ENCODE measurements at regions of chr10 and their contacts with region 1.

Region 1: DNA sequence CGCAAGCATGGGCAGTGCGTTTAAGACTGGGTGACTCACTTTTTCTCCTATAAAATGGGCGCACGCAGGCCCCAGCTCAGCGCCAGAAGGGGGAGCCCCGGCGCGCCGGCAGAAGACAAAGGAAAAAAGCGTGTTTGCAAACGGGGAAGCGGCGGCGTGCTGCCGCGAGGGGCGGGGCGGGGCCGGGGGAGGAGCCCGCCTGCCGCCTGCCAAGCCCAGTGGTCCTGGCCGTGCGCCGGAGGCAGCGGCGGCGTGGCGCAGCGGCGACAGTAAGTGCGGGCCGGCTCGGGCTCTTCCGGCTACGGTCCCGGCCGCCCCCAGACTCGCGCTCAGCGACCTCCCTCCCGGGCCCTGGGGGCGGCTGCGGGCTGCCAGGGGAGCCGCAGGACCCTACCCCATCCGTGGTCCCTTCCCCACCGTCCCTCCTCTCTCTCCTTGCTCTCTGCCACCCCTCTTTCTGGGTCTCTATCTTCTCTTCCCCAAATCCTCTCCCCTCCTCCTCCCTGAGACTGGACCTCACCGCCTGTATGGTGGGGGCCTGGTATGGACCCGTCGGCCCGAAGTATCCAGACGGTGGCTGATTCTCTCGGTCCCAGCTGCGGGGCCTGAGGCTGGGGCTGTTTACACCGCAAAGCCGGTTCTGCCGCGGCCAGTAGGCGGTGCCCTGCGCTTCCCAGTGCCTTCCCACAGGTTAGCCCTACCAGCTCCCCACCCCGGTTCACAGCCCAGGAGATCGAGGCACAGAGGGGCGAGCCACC is at the start of gene SLC29A3:
- DNase-seq: peak; percentile 59
- ATAC-seq: peak; percentile 91
- H3K4me3 ChIP-seq: peak within 1 kb of the TSS; percentile 73 to 86
- H3K27ac ChIP-seq: peak within 1 kb of the TSS; percentile 57; the same call in 1 of the 2 replicates
- H3K4me1 ChIP-seq: peaks cover 7 to 17% of the 10 kb centered on the region in 2 experiments; a peak in 3 of 4 replicates
- H3K27me3 ChIP-seq: no peaks in the 10 kb centered on the region
- CTCF ChIP-seq: peak; percentile 69 to 77 (median 73)
- POLR2A ChIP-seq: peak; percentile 61
- RAD21 ChIP-seq: peak; percentile 90
- total RNA-seq, gene SLC29A3: 5.9 TPM

Region 2: DNA sequence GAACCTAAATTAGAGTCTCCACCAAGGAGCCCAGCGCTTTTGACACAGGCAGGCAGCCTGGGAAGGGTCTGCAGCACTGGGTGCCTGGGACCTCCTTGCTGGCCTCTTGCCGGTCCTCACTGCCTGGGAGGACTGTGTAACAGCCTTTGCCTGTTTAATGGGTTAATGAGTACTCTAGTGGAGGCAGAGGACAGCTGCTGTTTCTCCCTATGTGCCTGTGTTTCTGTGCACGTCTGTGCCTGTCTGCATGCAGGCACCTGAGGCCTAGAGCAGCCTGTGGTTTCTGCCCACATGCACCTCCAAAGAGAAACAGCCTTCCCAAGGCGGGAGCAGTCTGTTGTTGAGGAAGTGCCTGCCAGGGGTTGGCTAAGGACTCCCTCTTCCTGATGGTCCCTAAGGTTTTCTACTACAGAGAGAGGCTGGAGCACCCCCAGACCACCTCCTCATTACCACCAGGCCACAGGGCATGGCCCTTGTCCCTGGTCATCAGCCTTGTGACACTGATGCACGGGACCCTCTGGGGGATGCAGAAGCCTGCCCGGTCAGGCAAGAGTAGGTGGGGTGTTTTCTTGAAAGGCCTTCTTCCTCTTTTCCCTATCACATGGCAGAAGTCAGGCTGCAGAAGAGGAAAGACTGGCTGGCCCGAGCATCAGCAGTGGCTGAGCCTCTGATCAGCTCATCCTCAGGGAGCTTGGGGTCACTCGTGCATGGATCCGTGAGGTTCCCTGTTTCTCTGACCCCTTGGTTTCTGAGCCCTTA is 14.1 kb after region 1 on chr10:
- CTCF ChIA-PET with region 1: no interaction called
- POLR2A ChIA-PET with region 1: no interaction called
- RAD21 ChIA-PET with region 1: no interaction called
- intact Hi-C with region 1: no loop called
- DNase-seq: no peak
- ATAC-seq: no peak
- H3K4me3 ChIP-seq: no peak overlapping the region
- H3K27ac ChIP-seq: no peak overlapping the region
- H3K4me1 ChIP-seq: no peaks in the 10 kb centered on the region
- H3K27me3 ChIP-seq: no peaks in the 10 kb centered on the region
- CTCF ChIP-seq: no peak
- POLR2A ChIP-seq: no peak
- RAD21 ChIP-seq: no peak

Region 3: GRCh38 chr10:71371750-71372166 is 52.5 kb after region 1 on chr10:
- CTCF ChIA-PET with region 1: interaction called, 22 read pairs
- POLR2A ChIA-PET with region 1: interaction called, 18 read pairs
- RAD21 ChIA-PET with region 1: interaction called in 1 of 2 experiments, 5 read pairs
- intact Hi-C with region 1: no loop called
- DNase-seq: no peak
- ATAC-seq: no peak
- H3K4me3 ChIP-seq: no peak overlapping the region
- H3K27ac ChIP-seq: no peak overlapping the region
- H3K4me1 ChIP-seq: peaks cover 6 to 21% of the 10 kb centered on the region in 2 experiments; a peak in 3 of 4 replicates
- H3K27me3 ChIP-seq: no peaks in the 10 kb centered on the region
- CTCF ChIP-seq: no peak
- POLR2A ChIP-seq: no peak
- RAD21 ChIP-seq: no peak

Region 4: GRCh38 chr10:71378336-71379117 is 59.3 kb after region 1 on chr10:
- CTCF ChIA-PET with region 1: interaction called, 22 read pairs
- POLR2A ChIA-PET with region 1: interaction called, 18 read pairs
- RAD21 ChIA-PET with region 1: interaction called, 3 to 5 read pairs
- intact Hi-C with region 1: loop called (anchors 1 kb)
- DNase-seq: no peak
- ATAC-seq: no peak
- H3K4me3 ChIP-seq: no peak overlapping the region
- H3K27ac ChIP-seq: no peak overlapping the region
- H3K4me1 ChIP-seq: peaks cover 8 to 12% of the 10 kb centered on the region in 2 experiments; a peak in 3 of 4 replicates
- H3K27me3 ChIP-seq: no peaks in the 10 kb centered on the region
- CTCF ChIP-seq: 0 out of 6 replicates have a peak, but pooled peaks of 1 of the 3 experiments have one; percentile 4
- POLR2A ChIP-seq: no peak
- RAD21 ChIP-seq: peak; percentile 19; the same call in 1 of the 2 replicates

Region 5: GRCh38 chr10:71569775-71570588 is 250.8 kb after region 1 on chr10:
- CTCF ChIA-PET with region 1: interaction called, 21 read pairs
- POLR2A ChIA-PET with region 1: no interaction called
- RAD21 ChIA-PET with region 1: interaction called in 1 of 2 experiments, 5 read pairs
- intact Hi-C with region 1: loop called (anchors 5 kb)
- DNase-seq: peak; percentile 18
- ATAC-seq: peak; percentile 82
- H3K4me3 ChIP-seq: no peak overlapping the region
- H3K27ac ChIP-seq: no peak overlapping the region
- H3K4me1 ChIP-seq: no peaks in the 10 kb centered on the region
- H3K27me3 ChIP-seq: 0 out of 2 replicates have a peak, but pooled peaks cover 3% of the 10 kb centered on the region
- CTCF ChIP-seq: peak; percentile 67 to 88 (median 83)
- POLR2A ChIP-seq: no peak
- RAD21 ChIP-seq: peak; percentile 79

Region 6: DNA sequence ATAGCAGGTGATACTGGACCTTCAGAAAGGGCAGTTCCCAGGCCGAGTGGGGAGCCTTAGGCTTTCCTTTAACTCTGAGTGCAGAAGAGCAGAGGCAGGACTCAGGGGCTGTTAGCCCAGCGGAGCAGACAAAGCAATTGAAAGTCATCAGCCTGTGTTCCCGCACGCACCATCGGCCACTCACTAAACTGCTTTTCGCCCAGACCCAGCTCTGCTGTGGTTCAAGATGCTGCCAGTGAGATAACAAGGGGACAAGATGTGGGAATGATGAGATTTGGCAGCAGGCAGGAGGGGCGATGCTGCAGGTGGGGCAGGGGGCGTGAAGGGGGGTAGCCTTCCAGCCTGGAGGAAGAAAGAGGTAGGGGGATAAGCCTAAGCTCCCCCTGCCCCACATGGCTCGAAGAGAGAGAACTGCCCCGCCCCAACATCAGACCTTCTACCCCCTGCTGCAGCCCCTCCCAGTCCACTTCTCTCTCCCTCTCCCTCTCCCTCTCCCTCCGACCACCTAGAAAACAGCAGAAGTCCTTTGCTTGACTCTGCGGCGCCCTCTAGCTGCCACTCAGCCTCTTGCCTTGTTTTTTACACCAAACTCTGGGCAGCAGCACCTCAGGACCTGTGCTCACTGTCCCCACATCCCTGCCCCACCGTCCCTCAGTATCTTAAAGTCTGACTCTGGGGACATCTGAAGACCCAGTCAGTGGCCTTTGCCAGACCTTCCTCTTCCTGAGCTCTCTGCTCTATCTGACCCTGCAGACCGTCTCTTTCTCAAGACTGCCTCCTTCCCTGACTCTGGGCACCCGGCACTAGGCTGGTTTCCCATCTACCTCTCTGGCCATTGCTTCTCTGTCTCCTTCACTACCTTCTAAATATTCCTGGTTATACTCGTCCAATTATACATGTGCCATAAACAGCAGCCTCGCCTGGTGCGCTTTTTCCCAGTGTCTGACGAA is 289.9 kb after region 1 on chr10:
- CTCF ChIA-PET with region 1: interaction called, 7 read pairs
- POLR2A ChIA-PET with region 1: no interaction called
- RAD21 ChIA-PET with region 1: no interaction called
- intact Hi-C with region 1: loop called (anchors 10 kb)
- DNase-seq: peak; percentile 49
- ATAC-seq: peak; percentile 75
- H3K4me3 ChIP-seq: no peak overlapping the region
- H3K27ac ChIP-seq: no peak overlapping the region
- H3K4me1 ChIP-seq: peaks cover 11 to 27% of the 10 kb centered on the region in 2 experiments
- H3K27me3 ChIP-seq: no peaks in the 10 kb centered on the region
- CTCF ChIP-seq: peak; percentile 59 to 94 (median 88)
- POLR2A ChIP-seq: no peak
- RAD21 ChIP-seq: peak; percentile 75

Region 7: DNA sequence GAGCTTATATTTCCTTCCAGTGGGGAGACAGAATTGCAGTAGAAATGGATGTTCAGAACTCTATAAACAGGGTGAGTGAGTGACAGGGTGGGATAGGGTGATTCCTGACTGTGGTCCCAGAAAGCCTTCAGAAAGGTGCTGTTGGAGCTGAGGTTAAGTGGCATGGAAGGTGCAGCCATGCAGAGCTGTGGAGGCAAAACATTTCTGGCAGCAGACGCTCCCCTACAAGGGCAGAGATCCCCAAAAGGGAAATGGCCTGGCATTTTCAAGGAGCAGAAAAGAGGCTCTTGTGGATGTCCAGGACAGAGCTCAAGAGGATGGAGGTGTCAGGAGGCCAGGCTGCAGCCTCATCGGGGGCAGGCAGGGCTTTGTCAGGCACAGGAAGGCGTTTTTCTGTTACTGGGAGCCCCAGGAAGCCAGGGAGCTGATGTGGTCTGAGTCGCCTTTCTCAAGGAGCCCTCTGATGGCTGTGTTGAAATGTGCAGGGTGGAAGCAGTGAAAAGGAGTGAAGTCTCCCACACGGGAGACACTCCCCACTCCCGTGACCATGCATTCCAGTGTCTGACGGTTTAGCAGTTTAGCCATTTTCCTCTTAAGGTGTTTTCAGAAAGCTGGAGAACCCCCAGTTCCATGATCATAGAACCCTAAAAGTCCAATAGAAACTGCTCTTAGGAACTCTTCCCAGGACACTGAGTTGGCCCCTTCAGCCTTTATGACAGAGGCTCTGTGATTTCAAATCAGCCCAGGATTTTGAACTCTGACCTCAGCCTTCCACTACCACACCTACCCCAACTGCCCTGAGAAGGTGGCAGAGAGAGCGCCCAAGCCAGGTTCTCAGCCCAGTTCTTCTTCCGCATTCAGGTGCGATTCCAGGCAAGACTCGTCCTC is 304.1 kb after region 1 on chr10:
- CTCF ChIA-PET with region 1: interaction called, 5 read pairs
- POLR2A ChIA-PET with region 1: no interaction called
- RAD21 ChIA-PET with region 1: no interaction called
- intact Hi-C with region 1: loop called (anchors 5 kb)
- DNase-seq: no peak
- ATAC-seq: peak; percentile 78
- H3K4me3 ChIP-seq: no peak overlapping the region
- H3K27ac ChIP-seq: no peak overlapping the region
- H3K4me1 ChIP-seq: peaks cover 23 to 28% of the 10 kb centered on the region in 2 experiments
- H3K27me3 ChIP-seq: no peaks in the 10 kb centered on the region
- CTCF ChIP-seq: peak in 2 of 3 experiments; percentile 27 to 33; a peak in 3 of 6 replicates
- POLR2A ChIP-seq: no peak
- RAD21 ChIP-seq: peak; percentile 40

Region 8: DNA sequence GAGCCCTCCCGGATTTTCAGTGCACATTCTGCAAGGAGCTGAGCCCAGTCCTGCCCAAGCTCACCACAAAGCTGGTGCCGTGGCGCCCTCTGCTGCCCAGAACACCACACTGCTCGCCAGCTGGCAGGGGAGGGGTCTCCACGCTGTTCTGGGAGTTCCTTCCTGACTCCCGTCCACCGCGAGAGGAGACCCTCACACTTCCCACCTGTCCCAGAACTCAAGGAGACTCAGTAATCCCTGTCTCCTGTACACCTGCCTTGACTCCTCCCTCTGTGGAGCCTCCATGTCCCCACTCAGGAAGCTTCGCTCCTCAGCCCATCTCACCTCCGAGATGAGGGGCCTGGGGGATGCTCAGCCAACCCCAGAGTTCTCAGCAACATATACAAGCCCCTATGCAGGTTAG is 389.1 kb after region 1 on chr10:
- CTCF ChIA-PET with region 1: interaction called, 35 read pairs
- POLR2A ChIA-PET with region 1: interaction called, 4 read pairs
- RAD21 ChIA-PET with region 1: interaction called in 1 of 2 experiments, 7 read pairs
- intact Hi-C with region 1: loop called (anchors 1 kb)
- DNase-seq: no peak
- ATAC-seq: peak; percentile 87
- H3K4me3 ChIP-seq: no peak overlapping the region
- H3K27ac ChIP-seq: no peak overlapping the region
- H3K4me1 ChIP-seq: 0 out of 4 replicates have a peak, but pooled peaks cover 0 to 4% of the 10 kb centered on the region in 2 experiments
- H3K27me3 ChIP-seq: no peaks in the 10 kb centered on the region
- CTCF ChIP-seq: peak; percentile 77 to 93 (median 89)
- POLR2A ChIP-seq: no peak
- RAD21 ChIP-seq: peak; percentile 93